ENCODE measurements at regions of chr15 and their contacts with region 1.

Region 1: DNA sequence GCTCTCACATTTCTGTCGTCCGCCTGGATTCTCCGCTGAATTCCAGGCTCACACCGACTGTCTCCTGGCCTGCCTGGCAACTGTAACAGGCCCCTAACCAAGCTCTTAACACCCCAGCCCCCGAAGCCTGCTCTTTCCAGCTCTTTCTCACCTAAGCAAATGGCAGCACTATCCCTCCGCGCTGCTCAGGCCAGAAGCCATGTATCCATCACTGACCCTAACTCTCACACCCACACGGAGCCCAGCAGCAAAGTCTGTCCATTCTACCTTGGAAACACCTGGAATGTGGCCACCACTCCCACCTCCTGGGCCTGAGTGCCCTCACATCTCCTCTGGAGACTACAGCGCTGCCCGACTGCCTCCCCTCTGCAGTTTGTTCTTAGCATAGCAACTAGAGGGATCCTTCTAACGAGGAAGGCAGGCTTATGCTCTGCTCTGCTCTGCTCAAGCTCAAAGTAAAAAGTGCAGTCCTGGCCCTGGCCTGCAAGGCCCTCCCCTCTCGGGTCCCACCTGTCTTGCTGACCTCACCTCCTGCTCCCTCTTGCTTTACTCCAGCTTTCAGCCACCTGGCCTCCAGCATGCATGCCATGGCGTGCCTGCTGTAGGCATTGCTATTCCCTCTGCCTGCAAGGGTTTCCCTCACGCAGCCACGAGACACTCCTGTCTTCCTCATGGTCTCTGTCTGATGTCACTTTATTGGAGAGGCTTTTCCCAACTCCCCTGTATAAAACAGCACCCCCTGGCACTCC is 27.2 kb downstream of the FEM1B start:
- DNase-seq: no peak
- ATAC-seq: no peak
- H3K4me3 ChIP-seq: no peak overlapping the region
- H3K27ac ChIP-seq: no peak overlapping the region
- H3K4me1 ChIP-seq: no peaks in the 10 kb centered on the region
- H3K27me3 ChIP-seq: no peaks in the 10 kb centered on the region

Region 2: DNA sequence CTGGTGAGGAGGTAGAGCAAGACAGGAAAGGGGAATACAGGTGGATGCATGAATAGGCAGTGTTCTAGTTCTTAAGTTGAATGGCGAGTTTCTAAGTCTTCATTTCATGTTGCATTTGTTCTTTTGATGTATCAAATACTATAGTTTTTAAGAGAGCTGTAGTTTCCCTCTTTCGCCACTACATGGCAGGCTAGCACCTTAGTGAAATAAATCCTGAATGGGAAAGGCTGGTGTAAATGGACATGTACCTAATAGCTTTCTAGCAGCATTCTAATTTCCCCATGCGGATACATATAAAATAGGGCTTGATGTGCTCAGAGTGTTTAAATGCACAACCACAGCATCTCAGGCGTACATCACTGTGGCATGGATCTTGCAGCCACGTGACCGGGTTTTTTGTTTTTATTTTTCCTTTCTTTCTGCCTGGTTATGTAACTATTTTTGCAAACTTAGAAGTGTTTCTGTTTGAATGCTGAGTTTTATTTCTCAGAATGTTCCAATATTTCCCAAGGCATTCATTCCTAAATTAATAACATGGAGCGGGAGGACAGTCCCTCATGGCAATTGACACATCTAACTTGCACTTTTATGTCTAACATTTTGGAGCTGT is 51.7 kb before region 1 on chr15:
- intact Hi-C with region 1: loop called in 2 of 4 experiments (anchors 10 kb)
- DNase-seq: no peak
- ATAC-seq: peak; percentile 43 to 52
- H3K4me3 ChIP-seq: no peak overlapping the region
- H3K27ac ChIP-seq: no peak overlapping the region
- H3K4me1 ChIP-seq: no peaks in the 10 kb centered on the region
- H3K27me3 ChIP-seq: no peaks in the 10 kb centered on the region

Region 3: DNA sequence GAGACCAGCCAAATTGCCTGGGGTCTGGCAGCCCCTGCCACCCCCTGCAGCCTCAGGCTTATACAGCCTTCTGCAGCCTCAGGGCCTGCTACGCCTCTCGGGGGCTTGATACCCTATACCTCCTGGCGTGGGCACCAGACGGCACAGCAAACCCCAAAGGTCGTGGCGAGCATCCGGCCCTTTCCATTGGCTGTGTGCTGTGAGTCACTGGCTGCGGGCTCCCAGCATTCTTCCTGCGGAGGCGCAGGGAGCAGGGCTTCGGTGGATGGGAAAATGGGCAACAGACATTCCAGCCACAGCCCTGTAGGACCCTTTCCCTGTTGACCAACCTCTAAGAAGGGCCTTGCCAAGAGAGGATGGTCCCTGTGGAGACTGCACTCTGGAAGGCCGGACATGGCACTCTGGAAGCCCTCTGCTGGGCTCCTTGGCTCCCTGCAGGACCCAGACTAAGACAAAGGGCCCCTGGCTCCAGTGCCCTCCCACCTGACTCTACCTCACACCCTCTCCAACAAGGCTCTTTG is 67.6 kb after region 1 on chr15:
- intact Hi-C with region 1: loop called in 1 of 4 experiments (anchors 5 kb)
- DNase-seq: peak in 2 of 3 donors; percentile 62 to 70
- ATAC-seq: peak; percentile 39 to 42
- H3K4me3 ChIP-seq: no peak overlapping the region
- H3K27ac ChIP-seq: no peak overlapping the region
- H3K4me1 ChIP-seq: peaks cover 6% of the 10 kb centered on the region
- H3K27me3 ChIP-seq: no peaks in the 10 kb centered on the region

Region 4: DNA sequence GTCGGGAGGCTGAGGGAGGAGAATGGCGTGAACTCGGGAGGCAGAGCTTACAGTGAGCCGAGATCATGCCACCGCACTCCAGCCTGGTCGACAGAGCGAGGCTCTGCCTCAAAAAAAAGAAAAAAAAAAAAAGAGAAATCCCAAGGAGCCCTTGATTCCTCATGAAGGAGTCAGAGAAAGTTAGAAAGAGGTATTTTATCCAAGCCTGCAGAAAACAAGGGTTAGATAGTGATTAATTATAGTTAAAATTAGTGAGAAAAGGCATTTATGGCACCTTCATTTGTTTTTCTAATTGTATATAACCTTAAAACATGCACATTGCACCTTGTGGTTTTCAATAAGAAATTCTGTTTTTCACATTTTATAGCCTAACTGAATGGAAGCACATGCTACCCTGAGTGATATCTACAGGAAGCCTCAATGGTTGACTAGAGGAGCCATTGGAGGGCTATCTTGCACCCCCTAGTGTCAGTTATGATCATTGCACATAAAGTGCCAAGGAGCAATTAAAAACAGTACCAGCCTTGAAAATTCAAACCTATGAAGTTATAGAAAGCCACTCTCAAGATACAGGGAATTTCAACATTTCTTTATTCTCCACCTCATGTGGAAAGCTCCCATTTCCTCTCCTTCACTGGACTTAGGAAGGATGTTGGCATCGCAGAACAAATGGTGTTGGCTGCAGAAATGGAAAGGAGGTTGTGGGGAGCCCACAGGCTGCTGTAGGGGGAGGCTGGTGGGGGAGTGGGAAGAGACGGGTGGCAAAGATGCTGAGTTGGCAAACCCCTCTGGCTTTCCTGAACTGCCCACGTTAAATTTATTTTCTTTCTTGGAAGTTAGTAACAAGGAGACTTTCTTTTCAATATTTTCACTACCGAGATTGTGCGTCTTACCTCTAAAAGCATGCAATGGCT is 78.7 kb after region 1 on chr15:
- intact Hi-C with region 1: loop called in 3 of 4 experiments (anchors 5 kb)
- DNase-seq: peak in 1 of 3 donors; percentile 5
- ATAC-seq: peak; percentile 44 to 54
- H3K4me3 ChIP-seq: no peak overlapping the region
- H3K27ac ChIP-seq: no peak overlapping the region
- H3K4me1 ChIP-seq: no peaks in the 10 kb centered on the region
- H3K27me3 ChIP-seq: no peaks in the 10 kb centered on the region

Region 5: GRCh38 chr15:68389936-68390790 is 85.4 kb after region 1 on chr15:
- intact Hi-C with region 1: loop called in 1 of 4 experiments (anchors 5 kb)
- DNase-seq: peak in 1 of 3 donors; percentile 46
- ATAC-seq: peak in 1 of 2 donors; percentile 77
- H3K4me3 ChIP-seq: no peak overlapping the region
- H3K27ac ChIP-seq: no peak overlapping the region
- H3K4me1 ChIP-seq: no peaks in the 10 kb centered on the region
- H3K27me3 ChIP-seq: no peaks in the 10 kb centered on the region

Region 6: GRCh38 chr15:68559345-68560310 is 254.9 kb after region 1 on chr15:
- intact Hi-C with region 1: loop called in 1 of 4 experiments (anchors 10 kb)
- DNase-seq: peak; percentile 82 to 94 (median 93)
- ATAC-seq: peak; percentile 91 to 94
- H3K4me3 ChIP-seq: peak overlapping the region; percentile 26
- H3K27ac ChIP-seq: no peak overlapping the region
- H3K4me1 ChIP-seq: no peaks in the 10 kb centered on the region
- H3K27me3 ChIP-seq: no peaks in the 10 kb centered on the region

Region 7: GRCh38 chr15:68578174-68578979 is 273.6 kb after region 1 on chr15:
- intact Hi-C with region 1: no loop called
- DNase-seq: peak; percentile 87 to 93 (median 93)
- ATAC-seq: peak; percentile 83 to 85
- H3K4me3 ChIP-seq: peak overlapping the region; percentile 93
- H3K27ac ChIP-seq: peak overlapping the region; percentile 76
- H3K4me1 ChIP-seq: peaks cover 5% of the 10 kb centered on the region
- H3K27me3 ChIP-seq: no peaks in the 10 kb centered on the region